ENCODE measurements at regions of chr6 and their contacts with region 1.

Region 1: GRCh38 chr6:5078121-5078669 is 6.9 kb upstream of the PPP1R3G start:
- DNase-seq: no peak
- ATAC-seq: peak; percentile 51

Region 2: GRCh38 chr6:5115168-5115567 is 37.0 kb after region 1 on chr6:
- intact Hi-C with region 1: loop called (anchors 2 kb)
- DNase-seq: no peak
- ATAC-seq: peak; percentile 42

Region 3: GRCh38 chr6:5626727-5627426 is 548.7 kb after region 1 on chr6:
- intact Hi-C with region 1: no loop called
- DNase-seq: no peak
- ATAC-seq: no peak